CD4-positive, alpha-beta T cell (primary cell): ENCODE measurements at regions of chr9 and their contacts with region 1.

Region 1: GRCh38 chr9:3525836-3526164 is at the start of gene RFX3:
- DNase-seq: peak; percentile 88 to 98 (median 92)
- ATAC-seq: peak; percentile 55
- H3K4me3 ChIP-seq: peak within 1 kb of the TSS; percentile 82
- H3K4me3 Mint-ChIP-seq: peak within 1 kb of the TSS; percentile 91
- H3K27ac ChIP-seq: peak within 1 kb of the TSS; percentile 100
- H3K27ac Mint-ChIP-seq: peak within 1 kb of the TSS; percentile 99
- H3K4me1 ChIP-seq: peaks cover 24% of the 10 kb centered on the region
- H3K4me1 Mint-ChIP-seq: peaks cover 74% of the 10 kb centered on the region
- H3K27me3 ChIP-seq: no peaks in the 10 kb centered on the region
- H3K27me3 Mint-ChIP-seq: peaks cover 5% of the 10 kb centered on the region
- CTCF ChIP-seq: no peak
- total RNA-seq, gene RFX3: 22.9 to 24.8 TPM

Region 2: GRCh38 chr9:2014696-2015580 is 1510.9 kb before region 1 on chr9 and contains the start of gene SMARCA2:
- CTCF ChIA-PET with region 1: no interaction called
- POLR2A ChIA-PET with region 1: interaction called, 4 read pairs
- intact Hi-C with region 1: loop called in 1 of 2 experiments (anchors 10 kb)
- DNase-seq: peak; percentile 94 to 99 (median 97)
- ATAC-seq: peak; percentile 77
- H3K4me3 ChIP-seq: peak within 1 kb of the TSS; percentile 84
- H3K4me3 Mint-ChIP-seq: peak within 1 kb of the TSS; percentile 100
- H3K27ac ChIP-seq: peak within 1 kb of the TSS; percentile 87 to 91
- H3K27ac Mint-ChIP-seq: peak within 1 kb of the TSS; percentile 99
- H3K4me1 ChIP-seq: peaks cover 12% of the 10 kb centered on the region
- H3K4me1 Mint-ChIP-seq: peaks cover 38% of the 10 kb centered on the region
- H3K27me3 ChIP-seq: no peaks in the 10 kb centered on the region
- H3K27me3 Mint-ChIP-seq: peaks cover 9% of the 10 kb centered on the region
- CTCF ChIP-seq: no peak
- total RNA-seq, gene SMARCA2: 268 to 272 TPM

Region 3: GRCh38 chr9:3224931-3225330 is 300.9 kb before region 1 on chr9:
- CTCF ChIA-PET with region 1: no interaction called
- POLR2A ChIA-PET with region 1: no interaction called
- intact Hi-C with region 1: no loop called
- DNase-seq: no peak
- ATAC-seq: no peak
- H3K4me3 ChIP-seq: no peak overlapping the region
- H3K4me3 Mint-ChIP-seq: no peak overlapping the region
- H3K27ac ChIP-seq: no peak overlapping the region
- H3K27ac Mint-ChIP-seq: no peak overlapping the region
- H3K4me1 ChIP-seq: no peaks in the 10 kb centered on the region
- H3K4me1 Mint-ChIP-seq: no peaks in the 10 kb centered on the region
- H3K27me3 ChIP-seq: no peaks in the 10 kb centered on the region
- H3K27me3 Mint-ChIP-seq: no peaks in the 10 kb centered on the region
- CTCF ChIP-seq: no peak

Region 4: DNA sequence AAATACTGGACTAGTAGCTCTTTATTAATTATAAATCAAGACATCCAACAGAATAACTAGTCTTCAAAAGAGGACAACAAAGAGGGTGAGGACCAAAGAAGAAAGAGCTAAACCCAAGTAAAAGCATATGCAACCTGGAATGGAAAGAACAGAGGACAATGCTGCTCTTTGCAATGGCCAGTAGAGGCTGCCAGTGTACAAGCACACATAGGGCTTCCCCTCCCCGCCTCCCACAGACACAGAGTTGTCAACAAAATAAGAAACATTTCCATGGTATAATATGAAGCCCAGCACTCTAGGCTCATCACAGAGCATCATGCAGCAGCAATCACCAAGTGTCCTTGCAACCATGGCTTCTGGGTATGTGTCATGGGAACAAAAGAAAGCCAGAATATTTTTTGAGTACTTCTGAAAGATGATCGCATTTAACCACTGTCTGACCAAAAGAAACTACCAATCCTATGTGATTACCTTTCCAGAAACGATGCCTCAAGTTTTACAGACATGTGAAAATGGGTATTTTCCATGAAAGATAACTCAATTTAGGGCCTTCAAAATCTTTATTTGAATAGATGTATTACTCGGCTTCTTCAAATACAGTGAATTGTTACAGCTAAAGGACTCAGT is 58.1 kb before region 1 on chr9:
- CTCF ChIA-PET with region 1: interaction called, 15 read pairs
- POLR2A ChIA-PET with region 1: interaction called, 19 read pairs
- intact Hi-C with region 1: no loop called
- DNase-seq: peak; percentile 34 to 82 (median 53)
- ATAC-seq: peak; percentile 100
- H3K4me3 ChIP-seq: no peak overlapping the region
- H3K4me3 Mint-ChIP-seq: no peak overlapping the region
- H3K27ac ChIP-seq: no peak overlapping the region
- H3K27ac Mint-ChIP-seq: no peak overlapping the region
- H3K4me1 ChIP-seq: peaks cover 3% of the 10 kb centered on the region
- H3K4me1 Mint-ChIP-seq: peaks cover 6% of the 10 kb centered on the region
- H3K27me3 ChIP-seq: no peaks in the 10 kb centered on the region
- H3K27me3 Mint-ChIP-seq: no peaks in the 10 kb centered on the region
- CTCF ChIP-seq: peak; percentile 88

Region 5: GRCh38 chr9:3495855-3496254 is 29.9 kb before region 1 on chr9:
- CTCF ChIA-PET with region 1: no interaction called
- POLR2A ChIA-PET with region 1: interaction called, 14 read pairs
- intact Hi-C with region 1: no loop called
- DNase-seq: no peak
- ATAC-seq: no peak
- H3K4me3 ChIP-seq: no peak overlapping the region
- H3K4me3 Mint-ChIP-seq: no peak overlapping the region
- H3K27ac ChIP-seq: no peak overlapping the region
- H3K27ac Mint-ChIP-seq: no peak overlapping the region
- H3K4me1 ChIP-seq: no peaks in the 10 kb centered on the region
- H3K4me1 Mint-ChIP-seq: peaks cover 54% of the 10 kb centered on the region
- H3K27me3 ChIP-seq: no peaks in the 10 kb centered on the region
- H3K27me3 Mint-ChIP-seq: no peaks in the 10 kb centered on the region
- CTCF ChIP-seq: no peak

Region 6: GRCh38 chr9:4297151-4297785 is 771.5 kb after region 1 on chr9:
- CTCF ChIA-PET with region 1: no interaction called
- POLR2A ChIA-PET with region 1: interaction called, 16 read pairs
- intact Hi-C with region 1: no loop called
- DNase-seq: peak in 11 of 14 experiments; percentile 9 to 59 (median 29)
- ATAC-seq: peak; percentile 43
- H3K4me3 ChIP-seq: peak overlapping the region; percentile 79
- H3K4me3 Mint-ChIP-seq: peak overlapping the region; percentile 98
- H3K27ac ChIP-seq: peak overlapping the region in 1 of 2 donors; percentile 45
- H3K27ac Mint-ChIP-seq: peak overlapping the region; percentile 52
- H3K4me1 ChIP-seq: peaks cover 24% of the 10 kb centered on the region
- H3K4me1 Mint-ChIP-seq: peaks cover 8% of the 10 kb centered on the region
- H3K27me3 ChIP-seq: peaks cover 7 to 24% of the 10 kb centered on the region in 2 experiments
- H3K27me3 Mint-ChIP-seq: peaks cover 49% of the 10 kb centered on the region
- CTCF ChIP-seq: peak; percentile 20

Region 7: DNA sequence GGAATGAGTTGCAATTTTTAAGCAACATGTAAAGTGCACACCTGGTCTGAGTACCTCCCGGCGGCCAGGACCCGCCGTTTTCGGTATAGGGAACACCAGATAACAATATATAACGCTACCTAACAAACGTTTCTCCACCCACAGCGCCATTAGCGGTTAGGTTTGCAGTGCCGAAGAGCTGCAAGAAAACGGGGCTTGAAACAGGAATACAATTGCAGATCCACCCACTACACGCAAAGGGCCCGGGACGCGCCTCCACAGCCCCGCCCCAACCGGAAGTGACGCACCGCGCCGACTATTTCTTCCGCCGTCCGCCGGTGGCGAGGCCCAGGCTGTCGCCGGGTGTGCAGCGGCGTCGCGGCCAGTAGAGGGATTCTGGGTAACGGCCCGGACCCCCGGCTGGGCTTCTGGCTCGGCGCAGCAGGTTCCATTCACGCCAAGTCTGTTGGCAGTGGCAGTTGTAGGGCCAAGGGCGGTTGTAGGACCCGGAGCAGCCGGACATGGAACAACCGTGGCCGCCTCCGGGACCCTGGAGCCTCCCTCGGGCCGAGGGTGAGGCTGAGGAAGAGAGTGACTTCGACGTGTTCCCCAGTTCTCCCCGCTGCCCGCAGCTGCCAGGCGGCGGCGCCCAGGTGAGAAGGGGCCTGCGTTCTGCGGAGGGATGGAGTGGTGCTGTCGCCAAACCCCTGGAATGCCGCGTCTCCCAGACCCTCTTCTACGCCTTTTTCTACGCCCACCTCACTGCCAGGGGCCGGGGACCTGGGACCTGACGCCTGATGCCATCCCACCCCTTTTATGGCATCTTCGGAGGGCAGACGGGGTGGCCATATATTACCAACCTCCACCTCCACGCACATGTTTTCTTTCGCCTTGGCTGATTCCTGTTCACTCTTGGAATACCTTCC is 1153.7 kb after region 1 on chr9 and contains the start of gene CDC37L1:
- CTCF ChIA-PET with region 1: no interaction called
- POLR2A ChIA-PET with region 1: interaction called, 16 read pairs
- intact Hi-C with region 1: no loop called
- DNase-seq: peak; percentile 97 to 100 (median 99)
- ATAC-seq: peak; percentile 82
- H3K4me3 ChIP-seq: peak within 1 kb of the TSS; percentile 95
- H3K4me3 Mint-ChIP-seq: no peak within 1 kb of the TSS
- H3K27ac ChIP-seq: peak within 1 kb of the TSS; percentile 95
- H3K27ac Mint-ChIP-seq: no peak within 1 kb of the TSS
- H3K4me1 ChIP-seq: peaks cover 20% of the 10 kb centered on the region
- H3K4me1 Mint-ChIP-seq: peaks cover 17% of the 10 kb centered on the region
- H3K27me3 ChIP-seq: no peaks in the 10 kb centered on the region
- H3K27me3 Mint-ChIP-seq: no peaks in the 10 kb centered on the region
- CTCF ChIP-seq: peak; percentile 74
- total RNA-seq, gene CDC37L1: 49.1 to 53.4 TPM